Activated CD4-positive, alpha-beta memory T cell treated with anti-CD3 and anti-CD28 coated beads for 36 hours (primary cell): ENCODE measurements at regions of chr9 and their contacts with region 1.

Region 1: GRCh38 chr9:126985870-126986498 is 71.4 kb downstream of the RALGPS1 start:
- DNase-seq: peak; percentile 90
- H3K4me3 Mint-ChIP-seq: no peak overlapping the region
- H3K27ac Mint-ChIP-seq: peak overlapping the region; percentile 19
- H3K4me1 Mint-ChIP-seq: peaks cover 40% of the 10 kb centered on the region
- H3K27me3 Mint-ChIP-seq: peaks cover 68% of the 10 kb centered on the region

Region 2: GRCh38 chr9:126999315-127000068 is 13.5 kb after region 1 on chr9:
- CTCF ChIA-PET with region 1: interaction called, 22 read pairs
- POLR2A ChIA-PET with region 1: interaction called, 21 read pairs
- intact Hi-C with region 1: no loop called
- DNase-seq: no peak
- H3K4me3 Mint-ChIP-seq: no peak overlapping the region
- H3K27ac Mint-ChIP-seq: no peak overlapping the region
- H3K4me1 Mint-ChIP-seq: peaks cover 17% of the 10 kb centered on the region
- H3K27me3 Mint-ChIP-seq: peaks cover 23% of the 10 kb centered on the region

Region 3: GRCh38 chr9:127004946-127005769 is 19.2 kb after region 1 on chr9:
- CTCF ChIA-PET with region 1: interaction called, 22 read pairs
- POLR2A ChIA-PET with region 1: interaction called, 21 read pairs
- intact Hi-C with region 1: loop called (anchors 1 kb)
- DNase-seq: peak; percentile 88
- H3K4me3 Mint-ChIP-seq: no peak overlapping the region
- H3K27ac Mint-ChIP-seq: peak overlapping the region; percentile 57
- H3K4me1 Mint-ChIP-seq: peaks cover 23% of the 10 kb centered on the region
- H3K27me3 Mint-ChIP-seq: peaks cover 25% of the 10 kb centered on the region

Region 4: GRCh38 chr9:127049044-127049443 is 63.1 kb after region 1 on chr9:
- CTCF ChIA-PET with region 1: interaction called, 4 read pairs
- POLR2A ChIA-PET with region 1: no interaction called
- intact Hi-C with region 1: loop called (anchors 1 kb)
- DNase-seq: peak; percentile 66
- H3K4me3 Mint-ChIP-seq: no peak overlapping the region
- H3K27ac Mint-ChIP-seq: peak overlapping the region; percentile 8
- H3K4me1 Mint-ChIP-seq: peaks cover 27% of the 10 kb centered on the region
- H3K27me3 Mint-ChIP-seq: no peaks in the 10 kb centered on the region

Region 5: GRCh38 chr9:127154390-127155191 is 168.6 kb after region 1 on chr9:
- CTCF ChIA-PET with region 1: interaction called, 6 read pairs
- POLR2A ChIA-PET with region 1: interaction called, 9 read pairs
- intact Hi-C with region 1: loop called (anchors 1 kb)
- DNase-seq: peak; percentile 70
- H3K4me3 Mint-ChIP-seq: no peak overlapping the region
- H3K27ac Mint-ChIP-seq: peak overlapping the region; percentile 9
- H3K4me1 Mint-ChIP-seq: peaks cover 21% of the 10 kb centered on the region
- H3K27me3 Mint-ChIP-seq: peaks cover 9% of the 10 kb centered on the region

Region 6: GRCh38 chr9:127388037-127388855 is 402.3 kb after region 1 on chr9:
- CTCF ChIA-PET with region 1: no interaction called
- POLR2A ChIA-PET with region 1: no interaction called
- intact Hi-C with region 1: loop called (anchors 1 kb)
- DNase-seq: peak; percentile 94
- H3K4me3 Mint-ChIP-seq: peak overlapping the region; percentile 38
- H3K27ac Mint-ChIP-seq: peak overlapping the region; percentile 70
- H3K4me1 Mint-ChIP-seq: peaks cover 30% of the 10 kb centered on the region
- H3K27me3 Mint-ChIP-seq: peaks cover 62% of the 10 kb centered on the region